MCF 10A (cell line): ENCODE measurements at regions of chr19 and their contacts with region 1.

Region 1: GRCh38 chr19:29873024-29873800 is 61.4 kb downstream of the CCNE1 start:
- DNase-seq: peak; percentile 23
- H3K4me3 Mint-ChIP-seq: no peak overlapping the region
- H3K27ac Mint-ChIP-seq: no peak overlapping the region
- H3K4me1 Mint-ChIP-seq: peaks cover 11% of the 10 kb centered on the region
- H3K27me3 Mint-ChIP-seq: peaks cover 10% of the 10 kb centered on the region
- CTCF ChIP-seq: peak; percentile 87

Region 2: DNA sequence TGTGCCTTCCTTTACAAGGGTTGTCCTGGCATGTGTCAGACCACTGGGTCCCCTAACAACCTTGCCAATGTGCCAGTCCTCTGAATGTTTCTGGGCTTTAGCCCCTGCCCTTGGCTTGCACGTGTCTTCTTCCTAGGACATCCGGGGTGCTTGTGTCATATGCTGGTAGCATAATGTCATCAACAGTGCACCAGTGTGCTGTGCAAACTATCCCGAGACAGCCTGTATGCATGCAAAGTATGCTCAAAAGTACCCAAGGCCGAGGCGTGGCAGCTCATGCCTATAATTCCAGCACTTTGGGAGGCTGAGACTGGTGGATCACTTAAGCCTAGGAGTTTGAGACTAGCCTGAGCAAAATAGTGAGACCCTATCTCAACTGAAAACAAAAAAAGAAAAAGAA is 137.4 kb before region 1 on chr19:
- CTCF ChIA-PET with region 1: interaction called, 82 read pairs
- POLR2A ChIA-PET with region 1: no interaction called
- intact Hi-C with region 1: loop called (anchors 1 kb)
- DNase-seq: no peak
- H3K4me3 Mint-ChIP-seq: no peak overlapping the region
- H3K27ac Mint-ChIP-seq: no peak overlapping the region
- H3K4me1 Mint-ChIP-seq: no peaks in the 10 kb centered on the region
- H3K27me3 Mint-ChIP-seq: peaks cover 59% of the 10 kb centered on the region
- CTCF ChIP-seq: no peak

Region 3: DNA sequence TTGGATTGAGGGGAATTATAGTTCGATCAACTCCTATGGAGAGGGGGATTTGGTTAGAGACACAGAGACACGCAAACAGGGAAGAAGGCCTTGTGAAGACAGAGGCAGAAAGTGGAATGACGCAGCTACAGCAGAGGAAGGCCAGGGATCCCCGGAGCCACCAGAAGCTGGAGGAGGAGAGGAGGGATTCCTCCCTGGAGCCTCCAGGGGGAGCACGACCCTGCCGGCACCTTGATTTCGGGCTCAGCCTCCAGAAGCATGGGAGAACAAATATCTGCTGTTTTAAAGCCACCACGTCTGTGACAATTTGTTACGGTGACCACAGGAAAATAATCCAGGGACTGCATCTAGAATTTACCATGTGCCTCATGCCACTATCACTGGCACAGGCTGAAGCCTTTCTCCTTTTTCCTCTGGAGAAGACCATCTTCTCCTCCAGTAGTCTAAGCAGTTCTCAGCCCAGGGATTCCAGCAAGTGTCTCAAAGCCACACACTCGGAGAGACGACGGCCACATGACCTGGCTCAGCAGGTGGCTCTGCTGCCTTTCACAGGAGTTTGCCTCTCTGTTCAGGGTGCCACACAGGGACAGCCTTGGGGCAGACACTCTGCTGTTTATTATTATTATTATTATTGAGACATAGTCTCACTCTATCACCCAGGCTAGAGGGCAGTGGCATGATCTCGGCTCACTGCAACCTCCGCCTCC is 101.4 kb before region 1 on chr19:
- CTCF ChIA-PET with region 1: interaction called, 48 read pairs
- POLR2A ChIA-PET with region 1: no interaction called
- intact Hi-C with region 1: loop called (anchors 1 kb)
- DNase-seq: peak; percentile 60
- H3K4me3 Mint-ChIP-seq: no peak overlapping the region
- H3K27ac Mint-ChIP-seq: no peak overlapping the region
- H3K4me1 Mint-ChIP-seq: peaks cover 5% of the 10 kb centered on the region
- H3K27me3 Mint-ChIP-seq: no peaks in the 10 kb centered on the region
- CTCF ChIP-seq: peak; percentile 44

Region 4: DNA sequence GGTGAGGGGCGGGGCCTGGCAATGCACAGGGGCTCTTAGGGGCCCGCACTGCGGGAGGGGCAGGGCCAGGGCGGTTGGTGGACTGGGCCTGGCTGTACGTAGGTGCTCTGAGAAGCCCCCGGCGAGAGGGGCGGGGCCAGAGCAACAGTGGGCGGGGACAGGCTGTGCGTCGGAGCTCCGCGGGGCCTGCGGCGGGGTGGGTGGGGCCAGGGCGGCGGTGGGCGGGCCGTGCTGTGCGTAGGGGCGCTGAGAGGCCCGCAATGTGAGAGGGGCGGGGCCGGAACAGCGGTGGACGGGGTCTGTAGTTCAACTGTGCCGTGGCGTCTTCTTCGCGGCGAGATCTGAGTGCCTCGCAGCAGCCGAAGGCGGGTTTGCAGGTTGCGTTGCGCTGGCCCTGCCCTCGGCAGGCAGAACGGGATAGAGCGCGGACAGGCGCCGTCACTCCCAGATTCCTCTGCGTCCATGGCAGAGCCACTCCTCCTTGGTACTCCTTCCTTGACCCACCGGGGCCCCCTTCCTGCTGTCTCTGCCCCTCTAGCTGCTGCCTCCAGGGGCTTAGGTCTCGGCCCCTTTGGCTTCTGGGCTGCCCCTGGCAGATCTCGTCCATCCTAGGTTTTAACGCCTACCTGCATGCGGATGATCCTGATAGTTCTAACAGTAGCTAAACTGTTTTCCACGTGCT is 28.2 kb before region 1 on chr19:
- CTCF ChIA-PET with region 1: interaction called, 13 read pairs
- POLR2A ChIA-PET with region 1: interaction called, 4 read pairs
- intact Hi-C with region 1: no loop called
- DNase-seq: peak; percentile 93
- H3K4me3 Mint-ChIP-seq: peak overlapping the region; percentile 94
- H3K27ac Mint-ChIP-seq: peak overlapping the region; percentile 94
- H3K4me1 Mint-ChIP-seq: peaks cover 9% of the 10 kb centered on the region
- H3K27me3 Mint-ChIP-seq: peaks cover 20% of the 10 kb centered on the region
- CTCF ChIP-seq: no peak

Region 5: GRCh38 chr19:29858000-29858596 is 15.1 kb before region 1 on chr19:
- CTCF ChIA-PET with region 1: interaction called, 72 read pairs
- POLR2A ChIA-PET with region 1: no interaction called
- intact Hi-C with region 1: no loop called
- DNase-seq: peak; percentile 38
- H3K4me3 Mint-ChIP-seq: no peak overlapping the region
- H3K27ac Mint-ChIP-seq: no peak overlapping the region
- H3K4me1 Mint-ChIP-seq: no peaks in the 10 kb centered on the region
- H3K27me3 Mint-ChIP-seq: peaks cover 15% of the 10 kb centered on the region
- CTCF ChIP-seq: peak; percentile 52

Region 6: DNA sequence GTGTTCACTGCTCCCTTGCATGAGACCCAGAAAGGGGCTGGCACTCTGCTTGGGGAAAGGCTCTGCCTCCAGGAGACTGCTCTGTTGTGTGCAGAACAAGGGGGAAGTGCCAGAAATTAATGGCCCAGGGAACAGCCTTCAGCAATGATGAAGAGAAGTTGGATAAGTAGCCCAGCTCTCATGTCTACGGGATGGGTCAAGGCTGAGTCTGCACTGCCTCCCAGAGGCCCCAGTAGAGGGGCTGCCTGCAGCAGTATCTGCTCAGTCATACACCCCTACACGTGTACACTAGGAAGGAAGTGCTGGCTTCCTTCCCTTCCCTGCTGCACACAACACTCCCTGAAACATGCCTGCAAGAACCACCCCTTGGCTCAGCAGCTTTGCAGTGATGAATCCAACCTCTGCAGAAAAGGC is 14.2 kb after region 1 on chr19:
- CTCF ChIA-PET with region 1: interaction called, 19 read pairs
- POLR2A ChIA-PET with region 1: no interaction called
- intact Hi-C with region 1: no loop called
- DNase-seq: no peak
- H3K4me3 Mint-ChIP-seq: no peak overlapping the region
- H3K27ac Mint-ChIP-seq: no peak overlapping the region
- H3K4me1 Mint-ChIP-seq: peaks cover 5% of the 10 kb centered on the region
- H3K27me3 Mint-ChIP-seq: no peaks in the 10 kb centered on the region
- CTCF ChIP-seq: no peak